Caco-2 (cell line): ENCODE measurements at regions of chr11 and their contacts with region 1.

Region 1: DNA sequence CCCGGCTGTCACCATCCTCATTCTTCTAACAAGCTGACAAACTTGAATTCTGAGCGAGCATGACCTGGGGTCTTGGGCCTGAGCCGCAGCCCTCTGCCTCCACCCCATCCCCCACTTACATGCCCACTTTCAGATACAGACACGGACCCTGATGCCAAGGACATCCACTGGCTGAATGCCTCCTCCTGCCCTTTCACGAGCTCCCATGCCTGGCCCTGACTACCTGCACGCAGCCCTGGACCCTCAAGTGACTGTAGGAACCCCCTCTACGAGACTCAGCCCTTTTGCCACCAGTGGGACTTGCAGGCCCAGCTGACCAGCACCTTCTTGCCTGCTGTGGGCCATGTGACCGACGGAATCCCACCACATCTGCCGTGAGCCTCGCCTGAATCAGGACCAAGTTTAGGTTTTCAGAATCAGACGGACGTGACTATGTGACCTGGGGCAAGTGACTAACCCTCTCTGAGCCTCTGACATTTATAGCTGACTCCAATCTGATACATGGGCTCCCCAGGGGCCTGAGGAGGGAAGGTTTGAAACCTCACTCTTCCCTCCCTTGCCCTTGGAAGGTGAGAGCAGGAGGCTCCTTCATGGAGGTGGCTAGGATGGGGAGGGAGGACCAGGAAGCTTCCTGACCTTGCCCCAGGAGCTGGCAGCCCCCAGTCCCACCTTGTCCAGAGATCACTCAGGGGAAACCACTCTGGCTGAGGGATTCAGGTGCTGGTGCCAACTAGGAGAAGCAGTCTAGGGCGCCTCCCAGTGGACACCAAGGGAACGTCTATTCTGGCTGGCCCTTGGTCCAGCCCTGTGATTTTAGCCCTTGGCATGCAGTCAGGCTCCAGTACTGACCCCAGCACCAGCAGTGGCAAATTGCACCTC is 46.9 kb upstream of the SYT7 start:
- DNase-seq: peak; percentile 80 to 87
- H3K4me3 ChIP-seq: no peak overlapping the region
- H3K4me3 Mint-ChIP-seq: peak overlapping the region; percentile 70
- H3K27ac Mint-ChIP-seq: peak overlapping the region; percentile 95
- H3K4me1 ChIP-seq: peaks cover 39% of the 10 kb centered on the region
- H3K4me1 Mint-ChIP-seq: peaks cover 49% of the 10 kb centered on the region
- H3K27me3 ChIP-seq: no peaks in the 10 kb centered on the region
- H3K27me3 Mint-ChIP-seq: no peaks in the 10 kb centered on the region
- CTCF ChIP-seq: peak; percentile 90 to 95

Region 2: DNA sequence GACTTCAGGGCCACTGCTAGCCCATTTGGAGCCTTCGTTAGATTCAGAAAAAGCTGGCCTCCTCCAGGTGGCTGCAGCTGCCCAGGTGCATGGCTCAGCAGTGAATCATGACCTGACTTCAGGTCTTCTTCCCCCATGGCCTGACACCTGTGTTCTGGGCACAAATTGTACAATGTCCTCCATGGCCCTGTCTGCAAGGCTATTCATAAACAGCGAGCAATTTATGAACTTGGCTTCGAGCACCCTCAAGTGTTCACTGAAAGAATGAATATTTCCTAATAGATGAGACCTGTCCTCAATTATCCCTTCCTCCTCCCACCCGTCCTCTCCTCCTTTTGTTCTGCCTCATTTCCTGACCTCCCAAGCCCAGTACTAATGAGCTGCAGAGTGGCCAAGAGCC is 454.4 kb before region 1 on chr11:
- CTCF ChIA-PET with region 1: no interaction called
- POLR2A ChIA-PET with region 1: no interaction called
- intact Hi-C with region 1: no loop called
- DNase-seq: peak; percentile 43 to 46
- H3K4me3 ChIP-seq: no peak overlapping the region
- H3K4me3 Mint-ChIP-seq: no peak overlapping the region
- H3K27ac Mint-ChIP-seq: no peak overlapping the region
- H3K4me1 ChIP-seq: peaks cover 8% of the 10 kb centered on the region; the same call in 1 of the 2 replicates
- H3K4me1 Mint-ChIP-seq: peaks cover 7% of the 10 kb centered on the region
- H3K27me3 ChIP-seq: no peaks in the 10 kb centered on the region
- H3K27me3 Mint-ChIP-seq: no peaks in the 10 kb centered on the region
- CTCF ChIP-seq: peak; percentile 25 to 40

Region 3: DNA sequence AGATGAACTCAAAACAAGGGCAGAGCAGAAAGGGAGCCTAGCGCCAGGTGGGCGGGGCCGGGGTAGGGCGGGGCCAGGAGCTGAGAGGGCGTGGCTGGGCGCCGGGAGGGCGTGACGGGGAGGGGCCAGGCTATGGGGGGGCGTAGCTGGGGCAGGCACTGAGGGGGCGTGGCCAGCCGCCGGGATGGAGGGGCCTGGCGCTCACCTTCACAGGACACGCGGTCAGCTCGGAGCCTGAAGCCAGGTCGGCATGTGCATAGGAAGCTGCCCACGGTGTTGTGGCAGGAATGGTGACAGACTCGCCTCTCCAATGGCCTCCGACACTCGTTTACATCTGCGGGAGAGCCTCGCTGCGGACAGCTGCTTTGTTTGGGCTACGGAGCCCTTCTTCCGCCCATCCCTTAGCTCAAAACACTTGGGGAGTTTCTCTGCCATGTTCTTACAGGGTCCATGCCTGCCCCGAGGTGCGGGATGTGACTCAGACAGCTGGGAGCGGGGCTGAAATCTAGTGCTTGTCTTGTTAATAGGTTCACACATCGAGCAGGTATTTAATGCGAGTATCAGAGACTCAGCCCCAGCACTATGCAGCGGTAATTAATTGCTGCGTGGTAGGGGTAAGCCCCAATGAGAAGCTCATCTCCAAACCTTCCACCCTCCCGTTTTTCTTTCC is 346.1 kb before region 1 on chr11:
- CTCF ChIA-PET with region 1: no interaction called
- POLR2A ChIA-PET with region 1: no interaction called
- intact Hi-C with region 1: no loop called
- DNase-seq: no peak
- H3K4me3 ChIP-seq: no peak overlapping the region
- H3K4me3 Mint-ChIP-seq: no peak overlapping the region
- H3K27ac Mint-ChIP-seq: no peak overlapping the region
- H3K4me1 ChIP-seq: 0 out of 2 replicates have a peak, but pooled peaks cover 5% of the 10 kb centered on the region
- H3K4me1 Mint-ChIP-seq: peaks cover 10% of the 10 kb centered on the region
- H3K27me3 ChIP-seq: no peaks in the 10 kb centered on the region
- H3K27me3 Mint-ChIP-seq: no peaks in the 10 kb centered on the region
- CTCF ChIP-seq: no peak

Region 4: DNA sequence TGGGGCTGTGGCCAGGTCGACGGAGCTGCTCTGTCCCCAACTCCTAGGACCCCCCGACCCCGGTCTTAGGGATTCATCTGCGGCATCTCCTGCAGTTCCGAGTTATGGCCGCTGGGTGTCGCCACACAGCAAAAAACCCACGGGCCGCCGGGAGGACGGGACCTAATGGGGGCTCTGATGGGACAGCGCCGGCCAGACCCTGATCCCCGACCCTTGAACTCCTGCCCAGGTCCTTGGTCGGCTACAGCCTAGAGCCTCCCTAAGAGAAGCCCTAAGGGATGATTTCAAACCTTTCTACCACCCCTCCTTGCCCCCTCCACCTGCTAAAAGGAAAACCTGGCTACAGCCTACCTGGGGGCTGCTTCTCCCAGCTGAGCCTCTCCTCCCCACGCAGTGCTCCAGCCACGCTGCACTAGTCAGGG is 150.1 kb before region 1 on chr11:
- CTCF ChIA-PET with region 1: interaction called, 3 read pairs
- POLR2A ChIA-PET with region 1: no interaction called
- intact Hi-C with region 1: loop called (anchors 1 kb)
- DNase-seq: peak; percentile 52 to 72
- H3K4me3 ChIP-seq: no peak overlapping the region
- H3K4me3 Mint-ChIP-seq: no peak overlapping the region
- H3K27ac Mint-ChIP-seq: no peak overlapping the region
- H3K4me1 ChIP-seq: peaks cover 12% of the 10 kb centered on the region
- H3K4me1 Mint-ChIP-seq: no peaks in the 10 kb centered on the region
- H3K27me3 ChIP-seq: no peaks in the 10 kb centered on the region
- H3K27me3 Mint-ChIP-seq: no peaks in the 10 kb centered on the region
- CTCF ChIP-seq: peak; percentile 94 to 97

Region 5: GRCh38 chr11:61516675-61517572 is 110.9 kb before region 1 on chr11:
- CTCF ChIA-PET with region 1: interaction called, 3 read pairs
- POLR2A ChIA-PET with region 1: no interaction called
- intact Hi-C with region 1: loop called (anchors 2 kb)
- DNase-seq: peak in 1 of 2 experiments; percentile 73
- H3K4me3 ChIP-seq: no peak overlapping the region
- H3K4me3 Mint-ChIP-seq: no peak overlapping the region
- H3K27ac Mint-ChIP-seq: no peak overlapping the region
- H3K4me1 ChIP-seq: peaks cover 23% of the 10 kb centered on the region
- H3K4me1 Mint-ChIP-seq: peaks cover 23% of the 10 kb centered on the region
- H3K27me3 ChIP-seq: no peaks in the 10 kb centered on the region
- H3K27me3 Mint-ChIP-seq: no peaks in the 10 kb centered on the region
- CTCF ChIP-seq: peak; percentile 97 to 99

Region 6: DNA sequence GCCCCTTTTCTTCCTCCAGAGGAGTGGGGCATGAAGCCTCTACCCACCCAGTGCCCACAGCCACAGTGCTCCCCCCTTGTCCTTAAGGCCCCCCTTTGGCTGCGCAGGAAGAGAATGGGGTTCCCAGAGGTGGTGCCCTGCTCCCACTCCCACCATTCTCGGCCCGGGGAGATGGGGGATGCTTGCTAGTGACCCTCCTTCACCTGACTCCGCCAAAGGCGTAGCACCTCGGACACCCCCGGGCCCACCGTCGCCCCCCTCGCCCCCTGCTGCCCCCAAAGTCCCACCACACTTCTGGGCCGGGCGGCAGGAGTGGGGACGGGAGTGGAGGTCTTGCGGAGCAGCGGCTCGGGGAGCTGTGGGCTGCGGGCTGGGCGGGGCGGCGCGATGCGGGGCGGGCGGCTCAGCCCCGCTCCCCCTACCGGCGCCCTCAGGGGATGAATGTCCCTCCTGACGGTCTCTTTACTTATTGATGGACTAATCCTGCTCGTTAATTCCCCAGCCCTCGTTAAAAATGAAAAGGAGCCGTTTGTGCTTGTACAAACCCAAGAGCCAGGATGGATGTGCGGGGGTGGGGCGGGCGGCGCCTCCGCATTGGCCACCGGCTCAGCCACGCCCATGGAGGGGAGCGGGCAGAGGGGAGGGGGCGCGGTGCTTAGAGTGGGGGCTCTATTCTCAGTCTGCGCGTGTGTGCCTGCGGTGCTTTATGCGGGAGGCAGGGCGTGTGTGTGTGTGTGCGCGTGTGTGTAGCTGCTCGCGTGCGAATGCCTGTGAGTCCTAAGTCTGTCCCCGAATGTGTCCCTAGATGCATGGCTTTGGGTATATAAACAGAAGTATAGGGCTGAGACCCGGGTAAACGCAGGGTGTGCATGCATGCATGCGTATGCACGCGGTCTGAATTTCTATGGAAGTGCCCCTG is 72.5 kb before region 1 on chr11:
- CTCF ChIA-PET with region 1: no interaction called
- POLR2A ChIA-PET with region 1: no interaction called
- intact Hi-C with region 1: no loop called
- DNase-seq: no peak
- H3K4me3 ChIP-seq: no peak overlapping the region
- H3K4me3 Mint-ChIP-seq: no peak overlapping the region
- H3K27ac Mint-ChIP-seq: no peak overlapping the region
- H3K4me1 ChIP-seq: no peaks in the 10 kb centered on the region; the same call in 1 of the 2 replicates
- H3K4me1 Mint-ChIP-seq: peaks cover 17% of the 10 kb centered on the region
- H3K27me3 ChIP-seq: no peaks in the 10 kb centered on the region
- H3K27me3 Mint-ChIP-seq: no peaks in the 10 kb centered on the region
- CTCF ChIP-seq: no peak

Region 7: DNA sequence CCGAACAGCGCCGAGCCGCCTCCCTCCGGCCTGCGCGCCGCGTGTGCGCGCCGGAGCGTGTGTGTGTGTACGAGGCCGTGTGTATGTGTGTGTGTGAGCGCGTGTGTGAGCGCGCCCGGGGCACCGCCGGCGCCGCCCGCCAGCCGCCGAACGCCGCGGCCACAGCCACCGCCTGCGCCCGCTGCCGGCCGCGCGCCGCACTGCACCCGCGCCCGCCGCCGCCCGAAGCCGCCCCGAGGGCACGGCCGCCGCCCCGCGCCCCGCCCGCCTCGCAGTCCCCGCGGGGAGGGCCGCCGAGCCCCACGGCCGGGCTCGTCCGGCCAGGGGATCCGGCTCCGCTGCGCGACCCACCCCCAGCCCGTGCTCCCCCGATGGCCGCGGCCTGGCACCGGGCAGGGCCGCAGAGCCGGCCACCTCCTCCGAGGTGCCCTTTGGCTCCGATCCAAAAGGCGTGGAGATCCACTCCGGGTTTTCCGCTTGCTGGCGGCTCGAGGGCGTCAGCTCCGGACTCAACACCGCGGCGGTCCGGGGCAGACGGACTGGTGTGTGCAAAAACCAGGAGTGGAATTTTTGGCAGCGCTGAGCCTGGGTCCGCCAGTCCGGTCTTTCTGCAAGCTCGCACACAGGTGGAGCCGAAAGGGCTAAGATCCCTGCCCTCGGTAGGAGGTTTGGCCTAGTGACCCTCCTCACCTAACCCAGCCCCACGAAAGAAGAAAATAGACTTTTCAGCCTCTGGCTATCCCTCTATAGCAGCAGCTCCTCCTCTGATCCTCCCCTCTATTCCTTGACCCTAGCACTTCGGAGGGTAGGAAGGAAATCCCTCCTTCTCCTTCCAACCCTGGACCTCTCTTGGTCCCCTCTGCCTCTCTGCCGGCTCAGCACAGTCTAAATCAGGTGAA is 46.5 kb before region 1 on chr11 and contains the start of gene SYT7:
- CTCF ChIA-PET with region 1: interaction called, 19 read pairs
- POLR2A ChIA-PET with region 1: no interaction called
- intact Hi-C with region 1: loop called (anchors 1 kb)
- DNase-seq: peak; percentile 97 to 100
- H3K4me3 ChIP-seq: peak within 1 kb of the TSS; percentile 80
- H3K4me3 Mint-ChIP-seq: peak within 1 kb of the TSS; percentile 74
- H3K27ac Mint-ChIP-seq: peak within 1 kb of the TSS; percentile 62
- H3K4me1 ChIP-seq: peaks cover 11% of the 10 kb centered on the region
- H3K4me1 Mint-ChIP-seq: peaks cover 21% of the 10 kb centered on the region
- H3K27me3 ChIP-seq: no peaks in the 10 kb centered on the region
- H3K27me3 Mint-ChIP-seq: no peaks in the 10 kb centered on the region
- CTCF ChIP-seq: no peak
- total RNA-seq, gene SYT7: 32.8 and 33.5 TPM in 2 replicates

Region 8: DNA sequence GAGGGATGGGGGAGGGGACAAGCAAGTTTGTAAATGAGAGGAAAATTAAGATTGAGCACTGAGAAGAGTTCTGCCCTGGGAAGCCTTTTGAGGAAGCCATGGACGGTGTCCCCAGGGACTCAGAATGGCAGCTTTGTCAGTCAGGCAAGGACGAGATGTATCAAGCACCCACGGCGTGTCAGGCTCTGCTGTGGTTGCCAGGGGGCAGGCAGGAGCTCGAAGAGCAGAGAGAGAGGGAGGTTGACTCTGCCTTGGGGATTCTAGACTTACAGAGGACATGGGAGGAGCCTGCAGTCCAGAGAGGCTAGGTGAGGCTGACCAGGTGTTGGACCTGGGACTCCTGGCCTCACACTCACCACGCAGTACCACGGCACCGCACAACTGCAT is 17.8 kb before region 1 on chr11:
- CTCF ChIA-PET with region 1: interaction called, 4 read pairs
- POLR2A ChIA-PET with region 1: no interaction called
- intact Hi-C with region 1: loop called (anchors 1 kb)
- DNase-seq: peak; percentile 68 to 71
- H3K4me3 ChIP-seq: no peak overlapping the region
- H3K4me3 Mint-ChIP-seq: peak overlapping the region; percentile 61
- H3K27ac Mint-ChIP-seq: peak overlapping the region; percentile 71
- H3K4me1 ChIP-seq: peaks cover 37% of the 10 kb centered on the region
- H3K4me1 Mint-ChIP-seq: peaks cover 22% of the 10 kb centered on the region
- H3K27me3 ChIP-seq: no peaks in the 10 kb centered on the region
- H3K27me3 Mint-ChIP-seq: no peaks in the 10 kb centered on the region
- CTCF ChIP-seq: peak in 1 of 2 experiments; percentile 25

Region 9: DNA sequence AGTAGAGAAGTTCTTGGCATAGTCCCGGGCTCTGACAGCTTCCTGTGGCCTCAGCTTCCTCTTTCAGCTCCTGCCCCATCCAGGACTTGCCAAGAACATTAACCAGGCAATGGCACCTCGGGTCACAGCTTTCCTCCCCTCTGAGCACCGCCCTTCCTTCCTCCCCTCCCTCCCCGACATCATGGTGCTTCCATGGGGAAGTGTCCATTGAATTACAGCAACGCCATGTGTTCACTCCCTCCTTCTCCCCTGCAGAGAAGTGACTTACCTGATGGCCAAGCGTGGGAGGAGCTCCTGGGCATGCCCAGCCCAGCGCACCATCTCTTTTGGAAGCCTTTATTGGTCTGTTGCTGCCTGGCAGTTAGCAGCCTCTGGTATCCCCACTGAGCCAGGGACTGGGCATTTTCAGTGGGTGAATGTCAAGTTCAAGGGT is 26.6 kb after region 1 on chr11:
- CTCF ChIA-PET with region 1: no interaction called
- POLR2A ChIA-PET with region 1: no interaction called
- intact Hi-C with region 1: no loop called
- DNase-seq: no peak
- H3K4me3 ChIP-seq: peak overlapping the region; percentile 1; the same call in 1 of the 2 replicates
- H3K4me3 Mint-ChIP-seq: peak overlapping the region; percentile 56
- H3K27ac Mint-ChIP-seq: peak overlapping the region; percentile 97
- H3K4me1 ChIP-seq: peaks cover 71% of the 10 kb centered on the region
- H3K4me1 Mint-ChIP-seq: peaks cover 55% of the 10 kb centered on the region
- H3K27me3 ChIP-seq: no peaks in the 10 kb centered on the region
- H3K27me3 Mint-ChIP-seq: no peaks in the 10 kb centered on the region
- CTCF ChIP-seq: no peak

Region 10: DNA sequence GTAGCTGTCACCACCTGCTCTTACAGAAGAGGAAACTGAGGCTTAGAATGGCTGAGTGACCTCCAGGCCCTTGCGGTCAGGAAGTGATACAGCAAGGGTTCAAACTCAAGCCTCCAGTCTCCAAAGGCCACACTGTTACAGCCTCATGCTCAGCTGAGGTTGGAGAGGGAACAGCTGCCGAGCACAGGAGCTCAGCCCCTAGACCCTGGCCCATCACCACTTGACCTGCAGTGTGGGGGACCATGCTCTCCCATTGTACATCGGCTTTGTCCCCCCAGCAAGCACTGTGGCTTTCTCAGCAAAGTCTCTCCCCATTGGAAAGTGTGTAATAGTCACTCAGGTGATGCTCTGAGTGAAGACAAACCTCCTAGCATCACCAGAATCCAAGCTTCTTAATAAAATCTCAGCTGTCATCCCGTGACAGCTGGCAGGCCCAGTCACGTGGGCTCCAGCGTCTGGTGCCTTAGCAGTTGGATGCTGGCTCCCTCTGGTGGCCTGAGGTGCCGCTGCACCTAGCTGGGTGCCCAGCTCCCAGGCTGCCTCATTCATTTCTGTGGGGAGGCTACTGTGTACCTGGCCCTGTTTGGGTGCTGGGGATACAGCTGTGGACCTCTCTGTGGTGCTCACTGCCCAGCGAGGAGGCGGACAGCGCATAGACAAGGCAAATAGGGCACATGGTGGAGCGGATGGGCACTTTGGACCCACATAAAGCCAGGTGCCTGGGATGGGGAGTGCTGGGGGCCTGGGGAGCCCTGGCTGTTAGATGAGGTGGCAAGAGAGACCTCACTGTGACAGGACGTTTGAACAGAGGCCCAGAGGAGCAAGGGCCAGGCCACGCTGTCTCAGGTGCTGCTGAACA is 105.5 kb after region 1 on chr11:
- CTCF ChIA-PET with region 1: no interaction called
- POLR2A ChIA-PET with region 1: no interaction called
- intact Hi-C with region 1: loop called (anchors 5 kb)
- DNase-seq: peak; percentile 79 to 85
- H3K4me3 ChIP-seq: no peak overlapping the region
- H3K4me3 Mint-ChIP-seq: no peak overlapping the region
- H3K27ac Mint-ChIP-seq: peak overlapping the region; percentile 84
- H3K4me1 ChIP-seq: no peaks in the 10 kb centered on the region
- H3K4me1 Mint-ChIP-seq: peaks cover 9% of the 10 kb centered on the region
- H3K27me3 ChIP-seq: no peaks in the 10 kb centered on the region
- H3K27me3 Mint-ChIP-seq: no peaks in the 10 kb centered on the region
- CTCF ChIP-seq: peak; percentile 98 to 99